ENCODE measurements at regions of chrX and their contacts with region 1.

Region 1: DNA sequence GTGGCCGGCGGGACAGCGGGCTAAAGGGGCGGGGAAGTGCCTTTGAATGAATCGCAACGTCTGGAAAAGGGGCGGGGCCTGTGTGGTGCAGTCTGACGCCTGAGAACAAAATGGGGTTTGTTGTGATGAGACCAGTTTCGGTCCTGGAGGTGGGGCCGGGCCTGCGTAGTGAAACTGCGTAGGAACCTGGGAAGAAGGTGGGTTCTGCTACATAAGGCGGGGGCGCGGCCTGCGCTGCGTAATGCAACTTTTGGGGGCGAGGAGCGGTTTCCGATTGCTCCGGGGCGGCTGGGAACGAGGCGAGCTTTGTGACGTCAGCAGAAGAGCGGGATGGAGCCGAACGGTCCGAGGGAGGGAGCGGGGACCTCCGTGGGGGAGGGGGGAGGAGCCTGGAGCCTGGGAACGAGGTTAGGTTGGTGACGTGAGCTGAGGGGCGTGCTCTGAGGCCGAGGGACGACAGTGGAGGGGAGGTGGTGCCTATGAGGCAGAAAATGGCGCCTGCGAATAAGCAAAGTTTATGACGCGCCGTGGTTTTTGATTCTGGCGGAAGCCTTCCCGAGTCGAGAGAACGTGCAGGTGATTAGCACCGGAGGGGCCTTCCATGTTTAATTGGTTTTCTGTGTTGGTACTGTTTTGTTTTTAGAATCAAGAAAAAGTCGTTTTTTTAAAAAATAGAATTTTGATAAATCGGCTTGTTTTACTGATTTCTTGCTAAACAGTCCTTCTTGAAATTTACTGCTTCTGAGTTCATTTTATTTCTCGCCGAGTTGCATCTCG is 716 bp downstream of the USP11 start:
- DNase-seq: peak; percentile 98
- H3K4me3 ChIP-seq: peak overlapping the region; percentile 64 to 73 (median 68)
- H3K27ac ChIP-seq: peak overlapping the region; percentile 93 to 97 (median 94)
- H3K4me1 ChIP-seq: peaks cover 0 to 6% (median 2%) of the 10 kb centered on the region in 4 donors
- H3K27me3 ChIP-seq: no peaks in the 10 kb centered on the region
- CTCF ChIP-seq: no peak
- EP300 ChIP-seq: peak in 1 of 4 donors; percentile 81
- POLR2A ChIP-seq: no peak

Region 2: DNA sequence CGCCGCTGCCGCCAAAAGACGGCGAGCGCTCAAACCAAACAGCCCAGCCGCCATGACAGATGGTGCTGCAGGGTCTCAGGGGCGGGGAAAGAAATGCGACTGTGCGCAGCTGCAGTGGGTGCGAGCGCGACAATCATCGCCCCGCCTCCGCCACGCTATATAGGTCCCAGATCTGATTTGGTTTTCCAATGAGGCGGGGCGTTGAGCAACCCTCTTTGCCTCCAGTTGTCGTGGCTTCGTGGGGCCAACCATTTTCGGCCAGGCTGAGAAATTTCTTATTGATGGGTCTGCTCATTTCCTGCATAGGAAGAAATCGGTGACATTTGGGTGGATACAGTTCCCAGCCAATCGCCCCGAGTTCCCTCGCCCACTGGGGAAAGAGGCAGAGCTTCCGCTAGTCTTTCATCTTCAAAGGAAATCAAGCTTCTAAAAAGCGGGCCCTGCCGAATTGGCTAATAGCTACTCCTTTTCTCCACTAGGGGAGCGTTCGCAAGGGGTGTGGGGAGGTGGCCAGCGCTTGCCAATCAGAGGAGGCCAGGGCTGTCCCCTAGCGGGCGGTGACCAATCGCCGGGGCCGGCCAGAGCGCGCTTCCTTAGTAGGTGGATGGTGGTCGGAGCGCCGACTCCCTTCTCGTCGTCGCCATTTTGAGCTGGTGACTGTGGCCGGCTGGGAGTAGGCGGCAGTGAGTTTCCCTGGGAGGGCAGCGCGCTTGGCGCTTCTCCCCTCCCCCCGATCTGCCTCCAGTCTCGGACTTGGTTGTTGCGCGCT is 88.7 kb before region 1 on chrX and contains the starts of genes NDUFB11 and RBM10:
- intact Hi-C with region 1: loop called (anchors 10 kb)
- DNase-seq: peak; percentile 98
- H3K4me3 ChIP-seq: peak within 1 kb of the TSS; percentile 62 to 69 (median 68)
- H3K27ac ChIP-seq: peak within 1 kb of the TSS; percentile 92 to 96 (median 94)
- H3K4me1 ChIP-seq: peaks cover 0 to 30% (median 18%) of the 10 kb centered on the region in 4 donors
- H3K27me3 ChIP-seq: no peaks in the 10 kb centered on the region
- CTCF ChIP-seq: peak; percentile 70 to 93 (median 82)
- EP300 ChIP-seq: no peak
- POLR2A ChIP-seq: peak; percentile 62 to 67
- total RNA-seq, gene NDUFB11: 64.3 to 103 (median 82.8) TPM
- total RNA-seq, gene RBM10: 17.1 to 28.0 (median 22.0) TPM

Region 3: DNA sequence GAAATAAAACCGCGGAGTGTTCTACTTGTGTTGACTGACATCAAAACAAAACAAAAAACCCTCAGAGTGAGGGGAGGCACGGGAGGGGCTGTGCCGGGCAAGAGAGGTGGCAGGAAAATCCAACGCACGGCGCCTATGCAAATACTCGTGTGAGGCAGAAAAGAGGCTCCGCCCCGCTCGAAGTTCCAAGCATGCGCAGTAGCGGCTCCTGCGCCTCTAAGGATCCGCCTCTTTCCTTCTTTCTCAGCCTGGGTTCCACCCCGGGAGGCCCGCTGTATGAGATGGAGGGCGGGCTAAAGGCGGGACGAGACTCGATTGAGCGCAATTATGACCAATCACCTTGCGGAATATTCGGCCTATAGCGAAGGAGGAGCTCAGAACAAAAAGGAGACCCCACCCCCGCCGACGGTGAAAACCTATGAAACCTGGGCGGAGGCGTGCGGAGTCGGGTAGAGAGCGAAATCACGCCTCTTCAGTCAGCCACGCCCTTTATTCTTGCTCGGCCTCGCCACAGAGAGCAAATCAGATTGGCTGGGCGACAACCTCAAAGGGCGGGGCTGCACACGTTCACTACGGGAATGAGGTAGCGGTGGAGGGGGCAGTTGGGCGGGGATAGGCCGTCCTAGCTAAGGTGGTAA is 15.8 kb before region 1 on chrX:
- intact Hi-C with region 1: loop called (anchors 2 kb)
- DNase-seq: peak; percentile 99
- H3K4me3 ChIP-seq: peak overlapping the region; percentile 42 to 97 (median 86)
- H3K27ac ChIP-seq: peak overlapping the region; percentile 96 to 99 (median 98)
- H3K4me1 ChIP-seq: peaks cover 0 to 42% (median 21%) of the 10 kb centered on the region in 4 donors
- H3K27me3 ChIP-seq: no peaks in the 10 kb centered on the region
- CTCF ChIP-seq: no peak
- EP300 ChIP-seq: no peak
- POLR2A ChIP-seq: peak in 1 of 2 donors; percentile 13

Region 4: GRCh38 chrX:47311932-47312774 is 78.6 kb after region 1 on chrX:
- intact Hi-C with region 1: loop called (anchors 5 kb)
- DNase-seq: peak; percentile 69
- H3K4me3 ChIP-seq: no peak overlapping the region
- H3K27ac ChIP-seq: peak overlapping the region in 1 of 4 donors; percentile 8
- H3K4me1 ChIP-seq: peaks cover 0 to 4% (median 0%) of the 10 kb centered on the region in 4 donors
- H3K27me3 ChIP-seq: no peaks in the 10 kb centered on the region
- CTCF ChIP-seq: peak in 1 of 4 experiments; percentile 27
- EP300 ChIP-seq: no peak
- POLR2A ChIP-seq: no peak

Region 5: DNA sequence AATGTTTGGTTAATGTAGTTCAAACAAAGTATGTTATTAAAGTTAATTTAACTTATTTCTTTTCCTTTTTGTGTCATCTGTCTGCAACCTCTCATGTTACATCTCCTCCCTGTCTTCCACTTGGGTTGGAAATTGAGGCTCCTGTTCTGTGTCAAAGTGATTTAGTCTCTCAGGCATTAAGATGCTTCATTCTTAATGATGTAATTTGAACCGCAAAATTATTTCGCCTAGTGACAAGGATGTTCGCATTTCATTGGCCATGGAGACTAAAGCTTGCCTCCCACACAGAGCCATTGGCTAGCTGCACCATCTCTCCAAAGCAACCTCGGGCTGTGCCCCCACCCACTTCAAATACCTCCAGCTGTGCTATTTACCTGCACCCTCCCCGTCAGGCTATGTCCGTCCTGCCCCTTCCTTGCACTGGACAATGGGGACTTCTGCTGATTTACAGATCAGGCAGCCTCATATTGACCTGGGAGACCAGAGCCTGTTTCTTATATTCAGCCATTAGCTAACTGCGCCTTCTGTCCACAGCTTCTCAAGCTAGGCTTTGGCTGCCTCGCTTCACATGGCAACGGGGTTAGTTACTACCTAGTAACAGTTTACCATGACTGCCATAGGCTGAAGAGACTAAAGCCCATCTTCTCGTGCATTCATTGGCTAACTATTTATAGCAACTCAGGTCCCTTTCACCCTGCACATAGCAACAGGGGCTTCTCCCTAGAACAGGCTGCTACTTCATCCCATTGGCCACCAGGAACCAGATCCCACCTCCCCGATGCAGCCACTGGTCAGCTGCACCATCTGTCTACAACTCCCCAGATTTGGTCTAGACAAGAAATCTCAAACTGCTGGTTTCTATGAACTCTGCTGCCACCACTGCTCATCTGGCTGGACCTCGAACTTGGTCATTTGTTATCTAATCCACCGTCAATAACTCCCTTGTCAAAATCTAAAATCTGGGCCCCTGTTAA is 128.3 kb after region 1 on chrX:
- intact Hi-C with region 1: loop called (anchors 5 kb)
- DNase-seq: peak; percentile 92
- H3K4me3 ChIP-seq: peak overlapping the region; percentile 7 to 44 (median 38)
- H3K27ac ChIP-seq: peak overlapping the region; percentile 69 to 85 (median 80)
- H3K4me1 ChIP-seq: no peaks in the 10 kb centered on the region
- H3K27me3 ChIP-seq: no peaks in the 10 kb centered on the region
- CTCF ChIP-seq: no peak
- EP300 ChIP-seq: no peak
- POLR2A ChIP-seq: no peak

Region 6: GRCh38 chrX:47482065-47482511 is 248.6 kb after region 1 on chrX:
- intact Hi-C with region 1: no loop called
- DNase-seq: peak; percentile 20
- H3K4me3 ChIP-seq: peak overlapping the region; percentile 68 to 89 (median 76)
- H3K27ac ChIP-seq: peak overlapping the region; percentile 91 to 96 (median 96)
- H3K4me1 ChIP-seq: peaks cover 0 to 20% (median 0%) of the 10 kb centered on the region in 4 donors
- H3K27me3 ChIP-seq: no peaks in the 10 kb centered on the region
- CTCF ChIP-seq: no peak
- EP300 ChIP-seq: no peak
- POLR2A ChIP-seq: no peak

Region 7: DNA sequence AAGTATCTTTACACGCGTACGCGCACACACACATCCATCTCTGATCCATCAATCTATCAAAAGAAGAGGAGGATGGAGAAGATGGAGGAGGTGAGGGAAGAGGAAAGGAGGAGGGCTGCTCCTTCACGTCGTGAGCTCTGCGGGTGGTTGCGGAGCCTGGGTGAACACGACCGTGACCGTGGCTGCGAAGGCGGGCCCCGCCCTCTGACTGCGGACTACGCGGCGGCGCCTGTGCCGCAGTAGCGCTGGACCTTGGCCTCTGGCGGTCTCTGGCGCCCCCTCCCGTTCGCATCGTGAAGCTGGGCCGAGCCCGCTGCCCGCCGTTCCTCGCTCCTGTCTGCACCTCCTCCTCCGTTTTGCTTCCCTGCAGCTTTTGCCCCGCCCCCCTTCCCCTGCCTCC is 289.8 kb after region 1 on chrX:
- intact Hi-C with region 1: loop called (anchors 2 kb)
- DNase-seq: peak; percentile 90
- H3K4me3 ChIP-seq: peak overlapping the region; percentile 29 to 60 (median 52)
- H3K27ac ChIP-seq: peak overlapping the region in 2 of 4 donors; percentile 19 to 42
- H3K4me1 ChIP-seq: peaks cover 0 to 6% (median 0%) of the 10 kb centered on the region in 4 donors
- H3K27me3 ChIP-seq: no peaks in the 10 kb centered on the region
- CTCF ChIP-seq: peak; percentile 42 to 67 (median 63)
- EP300 ChIP-seq: no peak
- POLR2A ChIP-seq: no peak

Region 8: DNA sequence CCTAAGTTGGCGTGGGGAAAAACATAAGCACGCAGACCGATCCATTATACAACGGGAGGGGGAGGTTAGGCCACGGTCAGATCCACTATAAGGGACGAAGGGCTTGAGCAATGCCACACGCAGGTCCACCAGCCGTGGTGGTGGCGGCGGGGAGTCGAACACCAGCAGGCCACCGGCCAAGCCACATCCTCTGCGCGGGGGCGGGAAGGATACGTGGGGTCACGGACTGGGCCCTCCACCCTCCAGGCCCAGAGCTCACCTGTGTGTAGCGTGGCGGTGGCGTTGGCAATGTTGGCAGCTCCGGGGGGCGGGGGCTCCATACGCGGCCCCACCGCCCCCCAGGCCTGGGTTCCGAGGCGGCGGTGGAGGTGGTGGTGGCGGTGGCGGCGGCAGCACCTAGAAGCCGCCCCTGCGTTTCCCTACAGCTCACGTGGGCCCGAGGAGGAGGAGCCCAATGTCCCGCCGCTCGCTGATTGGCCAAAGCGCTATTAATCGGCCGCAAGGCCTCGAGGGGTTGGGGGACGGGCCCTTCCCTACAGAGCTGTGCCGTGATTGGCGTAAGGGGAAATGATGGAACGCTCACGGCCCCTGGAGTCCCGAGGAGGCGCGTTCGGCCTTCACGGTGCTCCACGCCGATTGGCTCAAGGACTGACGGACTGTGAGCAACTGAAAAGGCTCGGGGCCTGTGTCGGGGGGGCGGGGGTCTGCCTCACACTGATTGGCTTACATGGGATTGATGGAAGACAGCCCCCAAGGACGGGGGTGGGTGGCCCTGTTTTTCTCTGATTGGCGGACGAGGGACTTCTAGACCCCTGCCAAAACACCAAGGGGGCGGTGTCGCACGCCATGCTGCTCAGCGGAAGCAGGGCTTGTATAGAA is 416.9 kb after region 1 on chrX and contains the start of gene ELK1:
- intact Hi-C with region 1: loop called (anchors 5 kb)
- DNase-seq: peak; percentile 99
- H3K4me3 ChIP-seq: peak within 1 kb of the TSS; percentile 51 to 73 (median 70)
- H3K27ac ChIP-seq: peak within 1 kb of the TSS; percentile 86 to 92 (median 88)
- H3K4me1 ChIP-seq: peaks cover 0 to 18% (median 12%) of the 10 kb centered on the region in 4 donors
- H3K27me3 ChIP-seq: no peaks in the 10 kb centered on the region
- CTCF ChIP-seq: no peak
- EP300 ChIP-seq: no peak
- POLR2A ChIP-seq: peak; percentile 43 to 50
- total RNA-seq, gene ELK1: 12.1 to 18.8 (median 16.8) TPM

Measured in sigmoid colon (tissue), 7 donors.